ENCODE measurements at regions of chr2 and their contacts with region 1.

Region 1: GRCh38 chr2:112784199-112785189 is at the start of gene IL1A:
- DNase-seq: no peak
- ATAC-seq: peak; percentile 32
- H3K4me3 Mint-ChIP-seq: peak within 1 kb of the TSS; percentile 73
- H3K27ac Mint-ChIP-seq: peak within 1 kb of the TSS; percentile 88
- H3K4me1 Mint-ChIP-seq: peaks cover 39% of the 10 kb centered on the region
- H3K27me3 Mint-ChIP-seq: no peaks in the 10 kb centered on the region
- CTCF ChIP-seq: no peak
- total RNA-seq, gene IL1A: 1.4 and 1.9 TPM in 2 replicates

Region 2: GRCh38 chr2:112764071-112765044 is 20.1 kb before region 1 on chr2 and contains the start of gene CKAP2L:
- CTCF ChIA-PET with region 1: no interaction called
- POLR2A ChIA-PET with region 1: interaction called, 4 read pairs
- intact Hi-C with region 1: loop called (anchors 1 kb)
- DNase-seq: peak; percentile 87
- ATAC-seq: peak; percentile 100
- H3K4me3 Mint-ChIP-seq: peak within 1 kb of the TSS; percentile 91
- H3K27ac Mint-ChIP-seq: peak within 1 kb of the TSS; percentile 50
- H3K4me1 Mint-ChIP-seq: peaks cover 31% of the 10 kb centered on the region
- H3K27me3 Mint-ChIP-seq: no peaks in the 10 kb centered on the region
- CTCF ChIP-seq: no peak
- total RNA-seq, gene CKAP2L: 1.2 TPM in 2 replicates

Region 3: GRCh38 chr2:112803691-112804521 is 19.4 kb after region 1 on chr2:
- CTCF ChIA-PET with region 1: interaction called, 3 read pairs
- POLR2A ChIA-PET with region 1: no interaction called
- intact Hi-C with region 1: loop called (anchors 2 kb)
- DNase-seq: no peak
- ATAC-seq: no peak
- H3K4me3 Mint-ChIP-seq: no peak overlapping the region
- H3K27ac Mint-ChIP-seq: no peak overlapping the region
- H3K4me1 Mint-ChIP-seq: peaks cover 14% of the 10 kb centered on the region
- H3K27me3 Mint-ChIP-seq: no peaks in the 10 kb centered on the region
- CTCF ChIP-seq: no peak

Measured in activated B cell treated with CpG ODN at 0.5 μM for 24 hours (primary cell).